ENCODE measurements at regions of chr19 and their contacts with region 1.

Region 1: DNA sequence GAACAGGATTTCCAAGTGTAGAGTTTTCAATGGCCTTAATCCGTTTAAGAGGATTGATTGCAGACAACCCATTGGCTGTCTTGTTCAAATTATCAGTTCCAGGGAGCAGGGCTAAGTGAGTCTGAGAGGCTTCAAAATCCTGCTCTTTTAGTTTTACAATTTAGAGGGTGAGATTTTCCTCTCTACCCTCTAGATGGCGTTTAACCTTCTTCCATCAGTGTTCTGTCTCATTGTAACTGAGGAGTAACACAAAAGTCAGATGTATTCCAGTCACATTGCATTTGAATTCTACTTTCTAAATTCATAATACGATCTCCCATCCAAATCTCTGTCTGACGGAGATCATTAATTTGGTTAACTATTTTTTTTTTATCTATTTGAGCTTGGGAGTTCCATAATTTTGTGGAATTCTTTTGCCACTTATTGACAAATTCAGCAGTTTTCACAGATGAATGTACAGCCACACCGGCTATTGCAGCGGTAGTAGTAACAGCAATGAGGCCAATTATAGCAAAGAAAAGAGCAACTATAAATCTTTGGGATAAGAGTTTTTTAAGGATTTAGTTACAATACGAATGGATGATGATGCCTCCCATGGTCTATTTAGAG is 7.8 kb upstream of the C19orf84 start:
- DNase-seq: no peak
- H3K4me3 ChIP-seq: no peak overlapping the region
- H3K27ac ChIP-seq: no peak overlapping the region
- H3K4me1 ChIP-seq: peaks cover 5% of the 10 kb centered on the region
- H3K27me3 ChIP-seq: no peaks in the 10 kb centered on the region
- CTCF ChIP-seq: peak in 2 of 3 experiments; percentile 19 to 51
- POLR2A ChIP-seq: no peak

Region 2: DNA sequence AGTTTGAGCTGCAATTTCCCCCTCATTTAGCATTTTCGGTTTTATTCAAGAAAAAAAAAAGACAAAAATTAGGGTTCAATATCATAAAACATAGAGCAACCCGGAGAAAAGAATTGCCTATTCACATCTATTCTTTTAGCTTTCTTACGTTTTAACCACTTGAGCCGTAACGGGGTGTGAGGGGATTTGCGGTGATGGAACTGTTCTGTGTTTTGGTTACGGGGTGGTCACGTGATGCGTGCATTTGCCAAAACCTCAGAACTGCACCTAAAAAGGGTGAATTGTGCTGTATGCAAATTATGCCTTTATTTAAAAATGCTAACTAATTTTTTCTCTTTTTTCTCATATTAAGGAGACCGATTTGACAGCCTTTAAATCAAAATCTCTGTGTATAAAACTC is 653.0 kb before region 1 on chr19:
- intact Hi-C with region 1: loop called (anchors 5 kb)
- DNase-seq: no peak
- H3K4me3 ChIP-seq: no peak overlapping the region
- H3K27ac ChIP-seq: no peak overlapping the region
- H3K4me1 ChIP-seq: no peaks in the 10 kb centered on the region
- H3K27me3 ChIP-seq: no peaks in the 10 kb centered on the region
- CTCF ChIP-seq: no peak
- POLR2A ChIP-seq: no peak

Region 3: GRCh38 chr19:51490676-51491075 is 92.5 kb after region 1 on chr19:
- intact Hi-C with region 1: no loop called
- DNase-seq: peak; percentile 78
- H3K4me3 ChIP-seq: no peak overlapping the region
- H3K27ac ChIP-seq: no peak overlapping the region
- H3K4me1 ChIP-seq: no peaks in the 10 kb centered on the region
- H3K27me3 ChIP-seq: no peaks in the 10 kb centered on the region
- CTCF ChIP-seq: no peak
- POLR2A ChIP-seq: no peak

Region 4: DNA sequence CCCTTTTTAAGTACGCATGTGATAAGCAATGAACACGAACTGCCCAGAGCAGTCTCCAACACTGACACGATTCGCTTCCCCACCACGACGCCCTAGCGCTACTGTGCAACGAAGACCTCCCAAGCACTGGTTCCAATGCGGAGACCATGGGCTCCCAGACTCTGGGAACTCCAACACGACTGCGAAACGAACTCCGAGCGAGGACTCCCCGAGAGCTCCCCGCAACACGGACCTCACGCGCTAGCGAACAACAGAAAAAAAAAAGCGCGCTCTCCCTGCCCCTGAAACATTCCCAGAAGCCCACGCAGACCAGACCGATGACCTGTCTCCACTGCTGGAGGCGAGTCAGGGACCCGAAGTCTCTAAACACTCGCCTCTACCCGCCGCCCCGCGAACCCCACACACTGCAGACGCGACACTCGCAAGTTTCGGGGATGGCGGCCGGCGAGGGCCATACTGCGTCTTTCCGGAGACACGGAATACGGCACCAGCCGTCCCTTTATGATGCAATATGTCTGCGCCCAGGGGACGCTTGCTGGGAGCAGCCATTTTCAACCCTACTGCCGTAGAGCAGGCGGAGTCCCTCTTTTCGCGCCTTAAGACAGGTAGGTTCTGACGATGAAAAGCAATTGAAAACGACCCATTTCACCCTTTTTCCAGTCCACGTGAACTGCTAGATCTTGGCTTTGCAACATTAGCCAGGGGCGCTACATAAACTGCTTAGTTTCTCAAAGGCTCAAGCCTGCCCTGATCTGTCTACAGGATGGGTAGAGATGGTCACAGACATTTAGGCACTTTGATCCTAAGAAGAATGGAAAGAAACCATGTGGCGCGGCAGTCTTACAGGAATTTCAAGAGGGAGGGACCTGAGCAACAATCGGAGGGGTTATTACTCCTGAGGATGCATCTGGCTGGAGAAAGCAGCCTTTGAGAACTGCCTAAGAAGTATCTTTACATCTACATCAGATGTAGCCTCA is 489.6 kb after region 1 on chr19 and contains the start of gene ZNF577:
- intact Hi-C with region 1: no loop called
- DNase-seq: peak; percentile 97
- H3K4me3 ChIP-seq: peak within 1 kb of the TSS; percentile 59 to 77
- H3K27ac ChIP-seq: peak within 1 kb of the TSS; percentile 58 to 63
- H3K4me1 ChIP-seq: no peaks in the 10 kb centered on the region
- H3K27me3 ChIP-seq: no peaks in the 10 kb centered on the region
- CTCF ChIP-seq: no peak
- POLR2A ChIP-seq: no peak
- total RNA-seq, gene ZNF577: 65.2 to 85.2 TPM

Measured in testis (tissue), 5 donors.